Mammary epithelial cell (primary cell): ENCODE measurements at regions of chr16 and their contacts with region 1.

Region 1: DNA sequence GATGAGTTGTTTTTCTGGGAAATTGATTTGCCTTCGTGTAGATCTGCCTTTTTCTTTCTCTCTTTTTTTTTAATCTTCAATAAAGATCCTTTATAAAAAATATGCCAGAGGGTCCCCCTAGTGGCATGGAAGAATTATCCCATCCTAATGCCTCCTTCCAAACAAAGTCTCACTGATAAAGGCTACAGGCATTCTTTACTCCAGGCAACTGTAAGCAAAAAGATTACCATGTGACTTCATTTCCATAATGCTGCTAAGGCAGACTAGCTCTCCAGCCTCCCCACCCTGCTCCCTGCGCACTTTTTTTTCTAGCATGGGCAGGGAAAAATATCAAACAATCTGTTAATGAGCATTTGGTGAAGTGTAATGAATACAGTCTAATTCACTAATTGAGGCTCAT is 220.2 kb upstream of the CDH8 start:
- DNase-seq: peak; percentile 45
- H3K4me3 ChIP-seq: no peak overlapping the region
- H3K27ac ChIP-seq: peak overlapping the region; percentile 34
- H3K4me1 ChIP-seq: peaks cover 38% of the 10 kb centered on the region
- H3K27me3 ChIP-seq: no peaks in the 10 kb centered on the region
- CTCF ChIP-seq: peak; percentile 62 to 68

Region 2: DNA sequence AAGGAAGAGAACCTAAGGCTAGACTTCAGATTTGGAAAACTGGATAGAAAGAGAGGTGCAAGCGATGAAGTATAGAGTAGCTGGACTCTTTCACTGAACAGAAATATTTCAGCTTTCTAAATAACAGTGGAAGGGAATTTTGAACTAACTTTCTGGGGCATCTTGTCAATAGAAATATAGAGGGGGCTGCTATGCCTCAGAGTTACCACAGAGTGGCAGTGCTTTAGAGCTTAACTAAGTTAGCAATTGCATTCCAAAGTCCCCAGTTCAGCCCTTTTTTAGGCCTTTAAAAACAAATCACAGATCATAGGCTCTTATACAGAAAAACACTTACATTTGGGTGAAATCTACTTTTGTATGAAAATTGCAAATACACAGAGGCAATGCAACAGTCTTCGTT is 66.0 kb before region 1 on chr16:
- CTCF ChIA-PET with region 1: interaction called, 12 read pairs
- dilution Hi-C with region 1: no loop called
- in situ Hi-C with region 1: no loop called
- intact Hi-C with region 1: loop called (anchors 1 kb)
- DNase-seq: peak; percentile 17
- H3K4me3 ChIP-seq: no peak overlapping the region
- H3K27ac ChIP-seq: no peak overlapping the region
- H3K4me1 ChIP-seq: no peaks in the 10 kb centered on the region
- H3K27me3 ChIP-seq: no peaks in the 10 kb centered on the region
- CTCF ChIP-seq: peak; percentile 83 to 84

Region 3: DNA sequence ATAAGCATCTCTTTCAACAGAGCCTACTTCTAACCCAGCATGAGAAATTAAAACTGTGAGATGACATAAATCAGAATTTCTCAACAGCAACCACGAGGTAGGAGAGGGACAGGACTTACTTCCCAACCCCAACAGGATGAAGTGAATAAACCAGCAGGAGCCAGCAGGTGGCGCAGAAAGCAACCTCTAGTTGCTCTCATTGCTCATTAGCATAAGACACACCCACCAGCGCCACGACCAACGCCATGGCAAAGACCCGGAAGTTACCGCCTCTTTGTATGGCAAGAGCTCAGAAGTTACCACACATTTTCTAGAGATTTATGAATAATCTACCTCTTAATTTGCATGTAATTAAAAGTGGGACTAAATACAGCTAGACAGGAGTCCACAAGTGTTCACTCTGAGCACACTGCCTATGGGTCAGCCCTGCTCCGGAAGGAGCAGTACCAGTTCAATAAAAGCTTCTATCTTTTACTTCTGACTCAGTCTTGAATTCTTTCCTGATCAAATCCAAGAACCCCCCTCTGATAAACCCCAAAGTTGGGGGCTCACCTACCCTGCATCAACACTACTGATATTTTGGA is 30.6 kb before region 1 on chr16:
- CTCF ChIA-PET with region 1: interaction called, 11 read pairs
- dilution Hi-C with region 1: no loop called
- in situ Hi-C with region 1: no loop called
- intact Hi-C with region 1: loop called (anchors 1 kb)
- DNase-seq: peak; percentile 80
- H3K4me3 ChIP-seq: no peak overlapping the region
- H3K27ac ChIP-seq: no peak overlapping the region
- H3K4me1 ChIP-seq: peaks cover 3% of the 10 kb centered on the region
- H3K27me3 ChIP-seq: no peaks in the 10 kb centered on the region
- CTCF ChIP-seq: peak; percentile 69 to 71

Region 4: GRCh38 chr16:62240722-62241121 is 15.7 kb before region 1 on chr16:
- CTCF ChIA-PET with region 1: no interaction called
- dilution Hi-C with region 1: no loop called
- in situ Hi-C with region 1: no loop called
- intact Hi-C with region 1: loop called (anchors 1 kb)
- DNase-seq: peak; percentile 86
- H3K4me3 ChIP-seq: no peak overlapping the region
- H3K27ac ChIP-seq: peak overlapping the region; percentile 63
- H3K4me1 ChIP-seq: peaks cover 17% of the 10 kb centered on the region
- H3K27me3 ChIP-seq: no peaks in the 10 kb centered on the region
- CTCF ChIP-seq: no peak